T-cell (primary cell): ENCODE measurements at regions of chr2 and their contacts with region 1.

Region 1: GRCh38 chr2:220795705-220796104 is 776.4 kb downstream of the EPHA4 start:
- DNase-seq: no peak
- ATAC-seq: no peak
- H3K4me3 ChIP-seq: no peak overlapping the region
- H3K4me3 Mint-ChIP-seq: no peak overlapping the region
- H3K27ac ChIP-seq: no peak overlapping the region
- H3K27ac Mint-ChIP-seq: no peak overlapping the region
- H3K4me1 ChIP-seq: no peaks in the 10 kb centered on the region
- H3K4me1 Mint-ChIP-seq: no peaks in the 10 kb centered on the region
- H3K27me3 ChIP-seq: no peaks in the 10 kb centered on the region
- H3K27me3 Mint-ChIP-seq: no peaks in the 10 kb centered on the region

Region 2: DNA sequence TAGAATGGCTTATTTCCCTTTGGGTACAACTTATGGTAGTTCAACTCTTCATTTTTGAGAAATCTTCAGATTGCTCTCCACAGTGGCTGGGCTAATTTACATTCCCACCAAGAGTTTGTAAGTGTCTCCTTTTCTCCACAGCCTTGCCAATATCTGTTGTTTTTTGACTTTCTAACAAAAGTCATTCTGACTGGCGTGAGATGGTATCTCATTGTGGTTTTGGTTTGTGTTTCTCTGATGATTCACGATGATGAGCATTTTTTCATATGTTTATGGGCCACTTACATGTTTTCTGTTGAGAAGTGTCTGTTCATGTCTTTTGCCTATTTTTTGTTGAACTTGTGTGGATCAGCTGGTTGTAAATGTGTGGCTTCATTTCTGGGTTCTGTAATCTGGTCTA is 94.6 kb before region 1 on chr2:
- CTCF ChIA-PET with region 1: no interaction called
- POLR2A ChIA-PET with region 1: interaction called in 1 of 2 experiments, 23 read pairs
- DNase-seq: no peak
- ATAC-seq: no peak
- H3K4me3 ChIP-seq: no peak overlapping the region
- H3K4me3 Mint-ChIP-seq: no peak overlapping the region
- H3K27ac ChIP-seq: no peak overlapping the region
- H3K27ac Mint-ChIP-seq: no peak overlapping the region
- H3K4me1 ChIP-seq: no peaks in the 10 kb centered on the region
- H3K4me1 Mint-ChIP-seq: no peaks in the 10 kb centered on the region
- H3K27me3 ChIP-seq: no peaks in the 10 kb centered on the region
- H3K27me3 Mint-ChIP-seq: no peaks in the 10 kb centered on the region

Region 3: GRCh38 chr2:220835583-220835982 is 39.9 kb after region 1 on chr2:
- CTCF ChIA-PET with region 1: no interaction called
- POLR2A ChIA-PET with region 1: no interaction called
- DNase-seq: no peak
- ATAC-seq: no peak
- H3K4me3 ChIP-seq: no peak overlapping the region
- H3K4me3 Mint-ChIP-seq: no peak overlapping the region
- H3K27ac ChIP-seq: no peak overlapping the region
- H3K27ac Mint-ChIP-seq: no peak overlapping the region
- H3K4me1 ChIP-seq: no peaks in the 10 kb centered on the region
- H3K4me1 Mint-ChIP-seq: no peaks in the 10 kb centered on the region
- H3K27me3 ChIP-seq: peaks cover 0 to 4% of the 10 kb centered on the region in 2 experiments
- H3K27me3 Mint-ChIP-seq: no peaks in the 10 kb centered on the region